Tibial artery (tissue), 4 donors: ENCODE measurements at regions of chr20 and their contacts with region 1.

Region 1: DNA sequence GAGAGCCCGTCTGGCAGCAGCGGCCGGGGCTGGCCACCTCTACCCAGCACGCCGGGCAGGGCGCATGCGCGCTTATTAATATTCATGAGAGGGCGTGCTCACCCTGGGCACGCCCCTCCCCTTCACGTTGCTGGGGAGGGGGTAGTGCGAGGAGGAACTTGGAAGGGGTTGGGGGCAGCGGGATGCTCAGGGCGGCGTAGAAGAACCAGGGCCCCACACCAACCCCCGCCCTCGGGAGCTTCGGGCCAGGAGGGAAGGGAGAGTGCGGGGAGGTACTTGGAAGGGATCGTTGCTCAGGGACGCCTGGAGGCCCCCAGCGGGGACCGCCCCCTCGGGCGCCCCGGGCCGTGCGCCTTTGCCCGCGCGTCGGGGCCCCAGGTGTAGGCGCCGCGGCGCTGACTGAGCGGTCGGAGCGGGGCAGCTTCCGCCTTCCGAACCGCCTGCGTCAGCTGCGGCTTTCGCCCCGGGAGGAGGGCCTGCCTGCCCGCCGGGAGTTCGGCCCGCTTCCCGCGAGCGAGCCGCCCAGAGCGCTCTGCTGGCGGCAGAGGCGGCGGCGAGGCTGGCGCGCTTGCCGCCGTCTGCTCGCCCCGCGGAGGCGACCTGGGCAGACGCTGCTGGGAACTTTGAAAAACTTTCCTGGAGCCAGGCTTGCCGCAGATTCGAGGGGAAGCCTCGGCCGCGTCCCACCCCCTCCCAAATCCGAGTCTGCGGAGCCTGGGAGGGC is at the start of gene JAG1:
- DNase-seq: peak; percentile 98
- H3K4me3 ChIP-seq: peak within 1 kb of the TSS; percentile 88 to 90
- H3K27ac ChIP-seq: peak within 1 kb of the TSS; percentile 99
- H3K4me1 ChIP-seq: peaks cover 0 to 17% (median 10%) of the 10 kb centered on the region in 4 donors
- H3K27me3 ChIP-seq: no peaks in the 10 kb centered on the region
- CTCF ChIP-seq: no peak

Region 2: GRCh38 chr20:9978397-9979004 is 695.6 kb before region 1 on chr20:
- intact Hi-C with region 1: loop called (anchors 5 kb)
- DNase-seq: peak in 1 of 2 donors; percentile 56
- H3K4me3 ChIP-seq: no peak overlapping the region
- H3K27ac ChIP-seq: no peak overlapping the region
- H3K4me1 ChIP-seq: peaks cover 0 to 6% (median 0%) of the 10 kb centered on the region in 4 donors
- H3K27me3 ChIP-seq: no peaks in the 10 kb centered on the region
- CTCF ChIP-seq: peak; percentile 69 to 85

Region 3: DNA sequence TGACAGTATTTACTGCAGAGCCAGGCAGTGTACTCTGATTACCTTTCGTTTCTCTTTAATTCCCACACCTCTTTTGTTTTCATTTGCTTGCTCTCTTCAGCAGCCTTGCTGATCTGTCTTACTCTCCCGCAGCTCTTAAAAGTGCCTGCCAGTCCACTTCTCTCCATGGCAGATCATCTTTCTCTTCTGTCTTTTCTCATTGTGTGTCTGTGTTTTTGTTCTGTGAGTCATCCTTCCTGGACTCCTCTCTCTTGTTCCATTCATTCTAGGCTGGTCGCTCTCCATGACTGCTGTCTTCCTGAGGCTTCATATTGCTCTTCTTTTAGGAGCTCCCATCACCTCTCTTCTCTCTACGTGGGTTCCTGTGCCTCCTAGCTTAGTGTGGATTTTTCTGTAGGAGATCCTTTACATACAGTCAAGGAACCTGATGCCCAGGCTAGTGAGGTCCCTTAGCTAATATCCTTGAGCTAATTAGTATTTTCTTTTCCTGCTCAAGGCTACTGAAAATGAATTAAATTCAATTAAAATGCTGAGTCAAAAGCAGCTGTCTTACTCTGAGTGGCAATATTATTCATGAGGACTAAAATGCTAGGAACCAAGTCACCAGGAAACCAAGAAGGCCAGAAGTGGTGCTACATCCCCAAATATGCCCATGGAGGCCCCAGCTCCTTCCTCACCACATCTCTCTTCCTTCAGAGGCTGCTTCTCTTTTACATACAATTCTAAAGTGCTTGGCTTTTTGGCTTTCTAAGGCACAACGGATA is 152.9 kb before region 1 on chr20:
- intact Hi-C with region 1: no loop called
- DNase-seq: no peak
- H3K4me3 ChIP-seq: no peak overlapping the region
- H3K27ac ChIP-seq: no peak overlapping the region
- H3K4me1 ChIP-seq: peaks cover 0 to 20% (median 5%) of the 10 kb centered on the region in 4 donors
- H3K27me3 ChIP-seq: no peaks in the 10 kb centered on the region
- CTCF ChIP-seq: no peak

Region 4: GRCh38 chr20:10553326-10553984 is 120.7 kb before region 1 on chr20:
- intact Hi-C with region 1: loop called (anchors 5 kb)
- DNase-seq: peak; percentile 74 to 83
- H3K4me3 ChIP-seq: no peak overlapping the region
- H3K27ac ChIP-seq: peak overlapping the region in 1 of 2 donors; percentile 46
- H3K4me1 ChIP-seq: peaks cover 0 to 76% (median 46%) of the 10 kb centered on the region in 4 donors
- H3K27me3 ChIP-seq: no peaks in the 10 kb centered on the region
- CTCF ChIP-seq: peak; percentile 79 to 85

Region 5: DNA sequence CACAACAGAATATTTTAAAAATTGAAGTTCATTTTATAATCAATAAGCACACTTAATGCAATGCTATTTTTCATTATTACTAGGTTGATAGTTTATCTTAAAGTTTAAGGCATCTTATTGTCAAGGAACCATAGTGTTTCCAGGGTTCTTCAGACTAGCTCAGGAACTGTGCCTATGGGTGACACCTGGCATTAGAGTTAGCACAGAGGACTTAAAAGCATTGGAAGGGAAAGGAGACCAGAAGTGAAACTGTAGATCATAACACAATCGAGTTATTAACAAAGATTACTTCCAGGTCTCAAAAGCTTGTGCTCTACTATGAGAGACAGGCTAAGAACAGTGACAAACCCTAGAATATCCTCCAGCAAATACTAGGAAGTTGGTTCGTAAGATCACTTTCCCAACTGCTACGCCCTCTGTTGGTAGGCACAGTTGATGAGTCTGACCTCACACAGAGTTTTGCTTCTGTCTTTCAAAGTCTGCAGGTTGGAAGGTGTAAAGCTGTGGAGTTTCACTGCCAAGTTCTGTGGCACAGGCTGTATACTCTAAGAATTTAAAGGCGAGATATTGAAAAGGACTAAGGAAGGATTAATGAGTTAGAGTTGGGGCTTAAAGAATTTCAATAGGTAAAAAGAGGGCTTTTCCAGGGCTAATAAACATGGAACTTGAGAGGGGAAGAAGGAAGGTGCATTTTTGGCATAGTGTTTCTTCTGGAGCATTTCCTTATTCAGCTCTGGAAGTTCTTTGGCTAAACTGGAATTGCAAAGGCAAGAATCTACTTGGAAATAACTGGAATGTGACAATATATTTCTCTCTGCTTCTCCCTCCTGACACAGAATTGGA is 531.0 kb after region 1 on chr20:
- intact Hi-C with region 1: loop called (anchors 10 kb)
- DNase-seq: peak; percentile 50 to 73
- H3K4me3 ChIP-seq: no peak overlapping the region
- H3K27ac ChIP-seq: peak overlapping the region; percentile 31 to 58
- H3K4me1 ChIP-seq: peaks cover 0 to 46% (median 14%) of the 10 kb centered on the region in 4 donors
- H3K27me3 ChIP-seq: no peaks in the 10 kb centered on the region
- CTCF ChIP-seq: peak; percentile 62 to 65

Region 6: DNA sequence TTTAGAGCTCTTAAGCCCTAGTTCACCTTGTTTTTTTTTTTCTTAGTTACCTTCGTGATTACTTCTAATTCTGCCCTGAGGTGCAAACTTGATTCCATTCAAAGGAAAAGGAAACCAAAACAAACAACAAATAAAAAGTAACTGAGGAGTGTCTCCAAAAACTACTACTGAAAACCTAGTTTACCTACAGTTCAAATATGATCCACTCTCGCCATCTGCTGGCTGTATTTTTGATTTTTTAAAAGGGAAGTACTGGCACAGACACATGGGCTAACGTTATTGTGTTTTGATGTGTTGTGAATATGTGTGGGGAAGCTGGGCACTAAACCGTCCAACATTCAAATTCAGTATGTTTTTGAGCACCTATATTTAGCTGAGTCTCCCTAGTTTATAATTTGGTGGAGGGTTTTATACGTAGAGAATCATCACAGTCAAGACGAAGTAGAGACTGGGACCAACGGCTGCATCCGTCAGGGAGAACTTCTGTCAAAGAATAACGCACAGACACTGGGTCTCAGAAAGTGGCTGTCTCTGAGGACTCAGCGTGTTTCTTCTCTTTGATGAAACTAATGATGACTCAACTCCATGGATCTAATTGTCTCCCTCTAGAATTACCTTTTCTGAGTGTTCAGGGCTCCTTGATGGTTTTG is 870.0 kb after region 1 on chr20:
- intact Hi-C with region 1: loop called (anchors 10 kb)
- DNase-seq: no peak
- H3K4me3 ChIP-seq: peak overlapping the region in 1 of 2 donors; percentile 32
- H3K27ac ChIP-seq: no peak overlapping the region
- H3K4me1 ChIP-seq: peaks cover 0 to 6% (median 2%) of the 10 kb centered on the region in 4 donors
- H3K27me3 ChIP-seq: no peaks in the 10 kb centered on the region
- CTCF ChIP-seq: peak; percentile 56 to 83